ENCODE measurements at regions of chr19 and their contacts with region 1.

Region 1: DNA sequence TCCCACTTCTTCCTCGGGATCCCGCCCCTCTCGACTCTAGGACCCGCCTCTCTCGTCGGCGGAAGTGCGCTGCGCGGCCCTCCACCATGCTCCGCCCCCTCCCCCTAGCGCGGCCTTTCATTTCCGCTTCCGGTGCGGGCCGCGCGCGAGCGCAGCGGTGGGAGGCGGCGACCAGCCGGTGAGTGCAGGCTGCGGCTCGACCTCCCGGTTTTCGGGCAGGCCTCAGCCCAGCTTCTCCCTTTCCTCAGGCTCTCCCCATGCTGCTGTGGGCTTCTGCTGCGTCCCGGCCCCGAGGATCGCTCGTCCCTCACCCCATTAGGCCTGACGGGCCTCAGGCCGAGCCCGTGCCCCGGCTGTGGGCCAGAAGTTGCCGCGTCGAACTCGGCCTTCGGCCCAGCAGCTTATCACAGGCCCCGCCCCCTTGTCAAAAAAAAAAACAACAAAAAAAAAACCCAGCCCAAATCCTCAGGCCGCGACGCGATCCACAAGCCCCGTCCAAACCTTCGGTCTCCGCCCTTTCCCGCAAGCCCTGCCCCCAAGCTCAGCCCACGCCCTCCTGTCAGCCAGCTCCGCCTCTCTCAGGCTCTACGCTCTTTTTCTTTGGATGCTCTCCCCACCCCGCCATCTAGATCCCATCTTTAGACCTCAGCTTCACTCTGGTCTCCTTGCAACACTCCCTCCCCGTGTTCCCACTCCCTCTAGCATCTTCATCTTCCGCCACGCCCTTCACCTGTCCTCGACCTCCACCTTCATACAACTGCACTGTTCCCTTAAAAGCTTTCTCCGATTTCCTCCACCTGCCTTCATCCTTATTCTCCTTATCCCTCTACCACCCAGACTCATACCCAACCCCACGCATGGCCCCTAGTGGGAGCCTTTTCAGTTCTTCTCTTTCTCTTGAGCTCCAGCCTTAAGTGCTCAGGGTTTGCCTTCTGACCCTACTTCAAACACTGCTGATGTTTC is at the start of gene CLASRP:
- DNase-seq: peak; percentile 94
- ATAC-seq: peak; percentile 96
- H3K4me3 Mint-ChIP-seq: peak within 1 kb of the TSS; percentile 97
- H3K27ac Mint-ChIP-seq: peak within 1 kb of the TSS; percentile 96
- H3K4me1 Mint-ChIP-seq: peaks cover 32% of the 10 kb centered on the region
- H3K27me3 Mint-ChIP-seq: no peaks in the 10 kb centered on the region
- total RNA-seq, gene CLASRP: 101 to 103 TPM

Region 2: GRCh38 chr19:45370410-45371204 is 331.4 kb after region 1 on chr19 and contains the start of gene ERCC2:
- CTCF ChIA-PET with region 1: no interaction called
- POLR2A ChIA-PET with region 1: no interaction called
- intact Hi-C with region 1: loop called in 1 of 2 experiments (anchors 1 kb)
- DNase-seq: peak; percentile 100
- ATAC-seq: peak; percentile 100
- H3K4me3 Mint-ChIP-seq: peak within 1 kb of the TSS; percentile 79
- H3K27ac Mint-ChIP-seq: peak within 1 kb of the TSS; percentile 97
- H3K4me1 Mint-ChIP-seq: peaks cover 8% of the 10 kb centered on the region
- H3K27me3 Mint-ChIP-seq: no peaks in the 10 kb centered on the region
- total RNA-seq, gene ERCC2: 27.5 to 30.4 TPM